ENCODE measurements at regions of chr12 and their contacts with region 1.

Region 1: DNA sequence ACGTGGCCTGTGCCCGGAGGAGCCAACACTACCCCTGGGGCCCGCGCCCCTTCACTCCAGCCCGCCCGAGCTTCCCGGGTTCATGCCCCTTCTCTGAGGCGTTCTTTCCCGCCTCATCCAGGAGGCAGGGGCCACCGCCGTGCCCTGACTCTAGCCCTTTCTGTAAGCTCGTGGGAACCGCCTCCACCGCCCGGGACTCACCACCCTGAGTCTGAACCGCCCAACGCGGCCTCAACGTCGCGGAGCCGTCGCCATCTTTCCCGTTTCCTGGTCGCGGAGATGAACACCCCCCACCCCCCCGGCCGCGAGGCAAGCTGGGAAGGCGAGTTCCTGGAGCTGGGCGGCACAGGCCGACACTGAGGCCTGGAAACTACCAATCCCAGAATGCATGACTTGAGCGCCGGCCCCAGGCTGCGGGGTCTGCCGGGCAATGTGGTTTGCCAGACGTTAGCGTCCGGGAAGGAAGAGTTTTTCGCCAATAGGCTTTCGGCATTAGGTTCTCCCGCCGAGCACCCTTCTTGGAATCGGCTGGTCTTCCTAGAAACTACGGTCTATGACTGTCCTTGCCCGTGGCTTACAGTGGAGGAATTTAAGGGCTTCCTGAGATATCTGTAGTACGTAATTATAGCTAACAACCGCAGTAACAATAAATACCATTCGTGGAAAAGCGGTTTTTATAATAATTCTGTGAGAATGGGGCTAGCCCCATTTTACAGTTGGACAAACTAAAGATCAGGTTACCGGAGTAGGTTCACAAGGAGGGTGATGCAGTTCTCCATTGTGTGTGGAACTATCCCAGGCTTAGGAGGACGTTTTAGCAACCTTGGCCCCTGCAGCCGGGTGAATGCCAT is at the start of gene DDX23:
- DNase-seq: peak; percentile 96
- ATAC-seq: peak; percentile 95
- H3K4me3 Mint-ChIP-seq: peak within 1 kb of the TSS; percentile 98
- H3K27ac Mint-ChIP-seq: peak within 1 kb of the TSS; percentile 98
- H3K4me1 Mint-ChIP-seq: peaks cover 33% of the 10 kb centered on the region
- H3K27me3 Mint-ChIP-seq: no peaks in the 10 kb centered on the region
- total RNA-seq, gene DDX23: 127 to 154 TPM

Region 2: DNA sequence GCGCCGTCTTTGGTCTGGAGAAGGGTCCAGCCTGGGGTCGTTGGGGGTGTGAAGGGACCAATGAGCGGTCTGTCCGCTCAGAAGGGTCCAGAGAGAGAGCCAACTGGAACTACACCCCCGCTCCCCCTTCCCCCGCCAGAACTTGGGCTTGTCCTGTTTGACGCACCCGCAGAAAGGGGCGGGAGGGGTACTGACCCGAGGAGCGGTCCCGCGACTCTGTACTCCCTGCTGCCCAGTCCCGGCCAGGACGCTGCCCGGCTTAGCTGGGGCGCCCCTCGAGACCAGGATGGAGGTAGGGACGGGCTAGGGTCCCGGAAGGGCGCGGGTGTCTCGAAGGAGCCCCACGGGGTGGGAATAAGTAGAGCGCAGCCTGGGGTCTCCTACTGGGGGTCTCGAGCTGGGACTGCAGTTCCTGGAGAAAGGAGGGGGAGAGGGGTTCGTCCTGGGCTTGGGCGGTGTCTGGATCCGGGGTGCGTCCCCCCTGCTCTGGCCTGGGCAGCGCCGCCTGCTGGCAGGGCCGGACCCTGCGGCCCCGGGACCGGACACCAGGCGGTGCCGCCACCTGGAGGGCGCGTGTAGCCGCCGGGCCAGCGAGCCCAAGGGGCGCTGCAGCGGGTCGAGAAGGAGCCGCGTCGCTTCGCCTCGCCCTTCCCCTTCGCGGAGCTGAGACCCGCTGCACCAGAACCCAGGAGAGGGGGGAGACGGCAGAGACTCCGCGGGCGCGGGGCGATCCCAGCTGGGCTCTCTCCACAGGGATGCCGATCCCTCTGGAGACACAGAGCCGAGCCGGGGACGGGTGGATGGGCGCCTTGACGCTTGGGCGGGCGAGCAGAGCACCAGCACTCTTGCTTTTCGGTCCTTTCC is 37.6 kb before region 1 on chr12:
- CTCF ChIA-PET with region 1: interaction called, 52 read pairs
- POLR2A ChIA-PET with region 1: interaction called, 9 read pairs
- DNase-seq: peak; percentile 87
- ATAC-seq: peak; percentile 85
- H3K4me3 Mint-ChIP-seq: peak overlapping the region; percentile 87
- H3K27ac Mint-ChIP-seq: peak overlapping the region; percentile 86
- H3K4me1 Mint-ChIP-seq: peaks cover 44% of the 10 kb centered on the region
- H3K27me3 Mint-ChIP-seq: peaks cover 29% of the 10 kb centered on the region

Region 3: GRCh38 chr12:48890657-48891418 is 38.7 kb after region 1 on chr12:
- CTCF ChIA-PET with region 1: interaction called, 260 read pairs
- POLR2A ChIA-PET with region 1: interaction called, 22 read pairs
- DNase-seq: peak; percentile 81
- ATAC-seq: peak; percentile 98
- H3K4me3 Mint-ChIP-seq: no peak overlapping the region
- H3K27ac Mint-ChIP-seq: no peak overlapping the region
- H3K4me1 Mint-ChIP-seq: peaks cover 8% of the 10 kb centered on the region
- H3K27me3 Mint-ChIP-seq: peaks cover 15% of the 10 kb centered on the region

Region 4: GRCh38 chr12:48924617-48925303 is 72.7 kb after region 1 on chr12:
- CTCF ChIA-PET with region 1: interaction called, 106 read pairs
- POLR2A ChIA-PET with region 1: interaction called, 12 read pairs
- DNase-seq: peak; percentile 85
- ATAC-seq: peak; percentile 87
- H3K4me3 Mint-ChIP-seq: peak overlapping the region; percentile 93
- H3K27ac Mint-ChIP-seq: peak overlapping the region; percentile 95
- H3K4me1 Mint-ChIP-seq: peaks cover 21% of the 10 kb centered on the region
- H3K27me3 Mint-ChIP-seq: no peaks in the 10 kb centered on the region

Region 5: GRCh38 chr12:48957141-48958048 is 105.3 kb after region 1 on chr12 and contains the start of gene ARF3:
- CTCF ChIA-PET with region 1: interaction called, 20 read pairs
- POLR2A ChIA-PET with region 1: interaction called, 11 read pairs
- DNase-seq: peak; percentile 95
- ATAC-seq: peak; percentile 96
- H3K4me3 Mint-ChIP-seq: peak within 1 kb of the TSS; percentile 94
- H3K27ac Mint-ChIP-seq: peak within 1 kb of the TSS; percentile 85
- H3K4me1 Mint-ChIP-seq: peaks cover 33% of the 10 kb centered on the region
- H3K27me3 Mint-ChIP-seq: peaks cover 14% of the 10 kb centered on the region
- total RNA-seq, gene ARF3: 104 to 108 TPM

Region 6: DNA sequence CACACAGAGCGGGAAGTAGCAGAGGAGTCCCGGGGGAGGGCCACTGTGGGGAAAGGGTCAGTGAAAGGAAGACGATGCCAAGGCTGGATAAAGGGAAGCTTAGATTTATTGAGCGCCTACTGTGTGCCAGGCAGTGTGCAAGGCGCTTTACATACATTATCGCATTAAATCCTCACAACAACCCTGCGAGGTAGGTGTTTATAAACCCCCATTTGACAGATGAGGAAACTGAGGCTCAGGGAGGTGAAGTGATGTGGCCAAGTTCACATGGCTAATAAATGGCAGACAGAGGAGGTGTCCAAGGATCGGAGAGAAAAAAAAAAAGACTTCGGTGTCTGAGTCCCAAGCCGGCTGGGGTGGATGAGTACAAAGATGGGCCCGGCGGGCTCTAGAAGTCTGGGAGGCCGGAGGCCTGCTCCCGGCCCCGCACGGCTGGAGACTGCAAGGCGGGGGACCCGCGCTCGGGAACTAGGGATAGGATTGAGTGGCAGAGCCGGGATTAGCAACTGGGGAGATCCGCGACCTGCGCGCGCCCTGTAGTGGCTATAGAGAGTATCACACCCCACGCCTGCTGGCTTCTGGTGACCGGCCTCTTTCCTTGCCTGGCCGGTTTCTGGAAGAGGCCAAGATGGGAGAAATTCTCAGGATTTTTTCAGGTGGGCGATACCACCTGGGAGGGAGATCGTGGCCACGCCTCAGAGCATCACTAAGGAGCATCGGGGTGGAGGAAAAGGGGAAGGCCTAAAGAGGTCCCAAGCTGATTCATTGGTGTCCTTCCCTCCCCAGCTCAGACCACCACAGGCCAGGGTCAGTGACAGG is 143.2 kb after region 1 on chr12:
- CTCF ChIA-PET with region 1: interaction called, 13 read pairs
- POLR2A ChIA-PET with region 1: no interaction called
- DNase-seq: peak; percentile 64
- ATAC-seq: peak; percentile 43
- H3K4me3 Mint-ChIP-seq: no peak overlapping the region
- H3K27ac Mint-ChIP-seq: no peak overlapping the region
- H3K4me1 Mint-ChIP-seq: peaks cover 36% of the 10 kb centered on the region
- H3K27me3 Mint-ChIP-seq: peaks cover 58% of the 10 kb centered on the region